ENCODE measurements at regions of chr15 and their contacts with region 1.

Region 1: GRCh38 chr15:59484399-59484798 is 46.4 kb downstream of the FAM81A start:
- DNase-seq: no peak
- H3K4me3 ChIP-seq: no peak overlapping the region
- H3K4me3 Mint-ChIP-seq: no peak overlapping the region
- H3K27ac ChIP-seq: no peak overlapping the region
- H3K27ac Mint-ChIP-seq: no peak overlapping the region
- H3K4me1 ChIP-seq: no peaks in the 10 kb centered on the region
- H3K4me1 Mint-ChIP-seq: peaks cover 4 to 7% (median 7%) of the 10 kb centered on the region in 3 donors
- H3K27me3 ChIP-seq: no peaks in the 10 kb centered on the region
- H3K27me3 Mint-ChIP-seq: peaks cover 11 to 14% of the 10 kb centered on the region in 2 donors

Region 2: GRCh38 chr15:59226966-59227365 is 257.4 kb before region 1 on chr15:
- CTCF ChIA-PET with region 1: no interaction called
- POLR2A ChIA-PET with region 1: no interaction called
- DNase-seq: no peak
- H3K4me3 ChIP-seq: no peak overlapping the region
- H3K4me3 Mint-ChIP-seq: no peak overlapping the region
- H3K27ac ChIP-seq: no peak overlapping the region
- H3K27ac Mint-ChIP-seq: no peak overlapping the region
- H3K4me1 ChIP-seq: no peaks in the 10 kb centered on the region
- H3K4me1 Mint-ChIP-seq: peaks cover 3 to 11% (median 7%) of the 10 kb centered on the region in 3 donors
- H3K27me3 ChIP-seq: no peaks in the 10 kb centered on the region
- H3K27me3 Mint-ChIP-seq: peaks cover 2 to 12% of the 10 kb centered on the region in 2 donors

Region 3: DNA sequence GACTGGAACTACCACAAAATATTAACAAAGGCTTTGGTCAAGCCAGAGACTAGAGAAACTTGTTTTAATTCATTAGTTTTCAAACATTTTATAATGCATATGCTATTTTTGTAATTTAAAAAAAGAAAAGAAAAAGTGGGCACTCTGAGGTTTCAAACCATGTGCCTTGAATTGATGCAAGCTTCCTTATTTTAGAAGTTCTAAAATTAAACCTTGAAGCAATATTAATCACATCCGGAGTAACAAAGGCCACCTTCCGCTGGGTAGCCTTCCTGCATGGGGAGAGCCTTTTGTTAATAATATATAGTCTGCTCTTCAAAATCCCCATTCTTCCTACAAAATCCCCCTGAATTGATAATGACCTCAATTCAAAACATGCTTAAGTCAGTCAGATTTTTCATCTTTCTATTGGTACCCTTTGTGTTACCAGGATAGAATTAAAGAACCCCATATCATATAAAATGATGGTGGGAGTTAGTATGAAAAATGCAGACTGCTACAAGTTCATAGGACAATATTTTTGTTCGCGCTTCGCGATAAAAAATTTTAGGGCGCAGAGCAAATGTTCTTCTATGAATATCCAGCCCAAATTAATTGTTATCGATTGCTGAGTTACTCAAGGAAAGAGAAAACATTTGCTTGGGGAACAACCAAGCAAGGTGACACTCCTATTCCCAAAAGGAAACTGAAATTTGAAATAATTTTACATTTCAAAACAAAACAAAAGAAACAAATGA is 247.1 kb before region 1 on chr15:
- CTCF ChIA-PET with region 1: no interaction called
- POLR2A ChIA-PET with region 1: interaction called, 10 read pairs
- DNase-seq: no peak
- H3K4me3 ChIP-seq: no peak overlapping the region
- H3K4me3 Mint-ChIP-seq: no peak overlapping the region
- H3K27ac ChIP-seq: no peak overlapping the region
- H3K27ac Mint-ChIP-seq: no peak overlapping the region
- H3K4me1 ChIP-seq: no peaks in the 10 kb centered on the region
- H3K4me1 Mint-ChIP-seq: no peaks in the 10 kb centered on the region
- H3K27me3 ChIP-seq: no peaks in the 10 kb centered on the region
- H3K27me3 Mint-ChIP-seq: peaks cover 2 to 6% of the 10 kb centered on the region in 2 donors